Right cardiac atrium (tissue), 5 donors: ENCODE measurements at regions of chr3 and their contacts with region 1.

Region 1: GRCh38 chr3:170221924-170222646 is at the start of gene PRKCI:
- DNase-seq: peak; percentile 97 to 99 (median 98)
- ATAC-seq: peak; percentile 100
- H3K4me3 ChIP-seq: peak within 1 kb of the TSS; percentile 80
- H3K27ac ChIP-seq: peak within 1 kb of the TSS; percentile 78
- H3K4me1 ChIP-seq: no peaks in the 10 kb centered on the region
- H3K27me3 ChIP-seq: no peaks in the 10 kb centered on the region
- total RNA-seq, gene PRKCI: 16.3 to 20.6 (median 17.0) TPM

Region 2: DNA sequence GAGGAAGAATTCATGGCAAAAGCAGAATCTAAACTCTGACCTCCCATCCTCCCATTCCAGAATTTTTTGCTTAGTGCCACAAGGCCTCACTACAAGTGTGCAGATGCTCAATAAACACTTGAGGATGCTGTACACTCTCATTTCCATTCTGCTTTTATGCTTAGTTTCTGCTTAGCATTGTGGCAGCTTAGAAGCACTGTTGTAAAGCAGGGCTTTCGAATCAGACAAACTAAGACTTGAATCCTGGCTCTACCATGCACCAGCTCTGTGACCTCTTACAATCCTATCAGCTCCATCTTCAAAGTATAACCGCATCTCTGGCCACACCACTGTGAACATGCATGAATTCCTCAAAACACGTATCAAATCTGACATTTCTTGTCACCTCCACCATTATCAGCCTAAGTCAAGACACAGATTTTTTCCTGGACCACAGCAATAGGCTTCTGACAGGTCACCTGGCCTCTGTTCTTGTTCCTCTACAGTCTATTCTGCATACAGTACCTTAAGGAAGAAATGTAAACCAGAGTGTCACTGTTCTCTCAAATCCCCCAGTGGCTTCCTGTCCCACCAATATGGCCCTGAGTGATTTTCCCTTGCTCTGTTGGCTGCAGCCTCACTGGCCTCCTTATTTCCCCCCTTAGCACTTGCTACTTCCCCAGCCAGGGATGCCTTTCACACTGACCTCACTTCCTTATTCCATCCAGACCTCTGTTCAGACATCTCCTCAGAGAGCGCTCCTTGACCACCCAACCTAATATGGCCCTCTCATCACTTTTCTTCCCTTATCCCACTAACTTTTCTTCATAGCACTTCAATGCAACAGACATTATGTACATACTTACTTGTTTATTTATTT is 32.5 kb before region 1 on chr3:
- intact Hi-C with region 1: loop called in 1 of 4 experiments (anchors 5 kb)
- DNase-seq: no peak
- ATAC-seq: peak; percentile 32 to 38
- H3K4me3 ChIP-seq: no peak overlapping the region
- H3K27ac ChIP-seq: no peak overlapping the region
- H3K4me1 ChIP-seq: no peaks in the 10 kb centered on the region
- H3K27me3 ChIP-seq: no peaks in the 10 kb centered on the region